Transverse colon (tissue), 4 donors: ENCODE measurements at regions of chr2 and their contacts with region 1.

Region 1: DNA sequence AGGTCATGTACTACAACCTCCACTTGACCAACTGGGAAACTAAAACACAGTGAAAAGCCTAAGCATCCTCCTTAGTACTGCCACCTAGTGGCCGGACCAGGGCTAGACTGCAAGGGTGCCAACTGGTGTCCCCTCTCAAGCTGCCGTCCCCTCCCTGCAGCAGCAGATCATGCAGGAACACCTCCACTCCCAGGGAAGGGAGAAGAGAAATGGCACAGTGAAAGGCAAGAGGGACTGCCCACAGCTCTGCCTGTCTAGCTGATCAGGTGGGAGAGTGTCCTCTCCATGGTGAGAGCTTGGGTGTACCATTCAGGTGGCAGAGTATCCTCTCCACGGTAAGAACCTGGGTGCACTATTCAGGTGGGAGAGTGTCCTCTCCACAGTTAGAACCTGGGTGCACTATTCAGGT is 78.1 kb downstream of the AAK1 start:
- DNase-seq: peak; percentile 64
- H3K4me3 ChIP-seq: no peak overlapping the region
- H3K27ac ChIP-seq: peak overlapping the region in 1 of 4 donors; percentile 50
- H3K4me1 ChIP-seq: peaks cover 0 to 52% (median 7%) of the 10 kb centered on the region in 4 donors
- H3K27me3 ChIP-seq: no peaks in the 10 kb centered on the region
- CTCF ChIP-seq: peak; percentile 51 to 66 (median 63)
- EP300 ChIP-seq: no peak
- POLR2A ChIP-seq: no peak

Region 2: DNA sequence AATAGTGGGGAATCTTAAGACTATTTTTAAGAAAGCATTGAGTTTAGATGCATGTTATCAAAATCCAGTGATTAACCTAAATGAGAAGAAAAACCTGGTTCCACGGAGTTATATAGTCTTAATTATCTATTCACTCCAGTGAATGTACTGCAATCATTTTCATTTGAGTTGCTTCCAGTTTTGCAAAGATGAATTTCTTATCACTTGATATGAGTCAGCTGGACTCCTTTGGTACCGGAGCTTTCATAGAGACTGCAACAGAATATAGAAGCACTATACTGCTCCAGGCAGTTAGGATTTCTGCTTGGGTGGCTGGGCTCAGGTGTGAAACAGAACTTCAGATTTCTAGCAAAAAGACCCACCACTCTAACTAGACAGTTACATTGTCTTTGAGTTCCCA is 36.0 kb before region 1 on chr2:
- in situ Hi-C with region 1: no loop called
- intact Hi-C with region 1: no loop called
- DNase-seq: no peak
- H3K4me3 ChIP-seq: no peak overlapping the region
- H3K27ac ChIP-seq: no peak overlapping the region
- H3K4me1 ChIP-seq: no peaks in the 10 kb centered on the region
- H3K27me3 ChIP-seq: no peaks in the 10 kb centered on the region
- CTCF ChIP-seq: no peak
- EP300 ChIP-seq: no peak
- POLR2A ChIP-seq: no peak

Region 3: DNA sequence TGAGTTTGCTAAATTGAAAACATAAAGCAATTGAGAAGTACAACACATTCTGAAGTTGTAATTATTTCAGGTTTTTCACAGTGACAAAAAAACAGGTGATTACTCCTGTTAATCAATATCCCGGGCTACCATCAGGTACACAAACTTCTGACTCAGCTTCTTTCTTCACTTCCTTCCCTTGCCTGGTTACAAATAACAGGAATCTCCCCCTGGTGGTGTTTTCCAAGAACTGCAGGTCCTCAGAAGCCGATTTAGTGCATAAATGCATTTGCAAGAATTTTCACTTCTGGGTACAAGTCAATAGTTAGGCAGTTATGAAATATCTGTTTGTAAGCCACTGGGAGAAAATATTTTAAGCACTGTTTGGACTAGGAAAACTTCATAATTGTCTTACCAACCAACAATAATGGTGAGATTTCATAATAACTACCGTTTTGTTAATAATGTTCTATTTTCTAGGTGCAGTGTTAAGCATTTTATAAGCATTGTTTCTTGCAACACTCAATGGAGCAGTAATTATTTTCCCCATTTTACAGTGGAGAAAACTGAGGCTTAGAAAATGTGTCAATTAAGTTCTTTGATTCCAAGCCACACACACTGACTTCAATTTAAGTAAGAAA is 251.6 kb after region 1 on chr2:
- in situ Hi-C with region 1: loop called (anchors 25 kb)
- intact Hi-C with region 1: no loop called
- DNase-seq: peak; percentile 82
- H3K4me3 ChIP-seq: no peak overlapping the region
- H3K27ac ChIP-seq: no peak overlapping the region
- H3K4me1 ChIP-seq: peaks cover 0 to 4% (median 0%) of the 10 kb centered on the region in 4 donors
- H3K27me3 ChIP-seq: no peaks in the 10 kb centered on the region
- CTCF ChIP-seq: peak; percentile 91 to 98 (median 95)
- EP300 ChIP-seq: no peak
- POLR2A ChIP-seq: no peak